ENCODE measurements at regions of chr6 and their contacts with region 1.

Region 1: DNA sequence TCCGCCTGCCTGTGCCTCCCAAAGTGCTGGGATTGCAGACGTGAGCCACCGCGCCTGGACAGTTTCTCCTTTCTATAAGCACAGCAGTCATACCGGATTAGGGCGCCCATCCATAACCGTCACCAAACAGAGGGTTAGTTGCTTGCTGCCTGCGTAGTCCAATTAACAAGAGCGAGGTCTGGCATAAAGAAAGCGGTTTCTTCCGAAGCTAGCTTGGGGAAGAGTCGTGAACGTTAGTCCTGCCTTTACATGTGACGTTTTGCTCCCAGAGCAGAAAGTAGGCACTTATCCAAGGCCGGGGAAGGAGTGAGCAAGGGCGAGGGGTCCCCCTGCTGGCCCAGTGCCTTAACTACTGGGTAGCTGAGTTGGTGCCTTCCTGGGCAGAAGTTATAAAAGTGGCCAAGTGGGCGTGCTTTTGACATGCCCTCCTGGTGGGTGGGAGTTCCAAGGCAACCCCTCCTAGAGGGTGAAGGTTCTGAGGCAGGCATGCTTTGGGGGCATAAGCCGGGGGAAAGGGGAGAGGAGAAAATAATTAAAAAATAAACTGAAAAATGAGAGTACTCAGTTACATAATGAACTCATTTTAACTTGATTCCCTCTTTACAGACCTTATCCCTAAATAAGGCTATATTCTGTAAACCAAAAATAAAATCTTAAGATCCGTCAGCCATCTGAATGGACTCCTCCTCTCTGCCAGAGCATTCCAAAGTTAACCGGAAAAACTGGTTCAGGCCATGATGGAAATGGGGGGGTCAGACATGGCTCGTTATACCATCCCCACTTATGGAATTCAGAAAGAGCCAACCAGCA is 88.0 kb downstream of the FAM217A start:
- DNase-seq: peak; percentile 77
- ATAC-seq: peak; percentile 98
- H3K4me3 ChIP-seq: peak overlapping the region in 1 of 3 experiments; percentile 52; a peak in 2 of 6 replicates
- H3K27ac ChIP-seq: no peak overlapping the region
- H3K4me1 ChIP-seq: peaks cover 20% of the 10 kb centered on the region
- H3K27me3 ChIP-seq: no peaks in the 10 kb centered on the region
- CTCF ChIP-seq: peak; percentile 99
- EP300 ChIP-seq: no peak
- POLR2A ChIP-seq: no peak
- RAD21 ChIP-seq: peak; percentile 96

Region 2: DNA sequence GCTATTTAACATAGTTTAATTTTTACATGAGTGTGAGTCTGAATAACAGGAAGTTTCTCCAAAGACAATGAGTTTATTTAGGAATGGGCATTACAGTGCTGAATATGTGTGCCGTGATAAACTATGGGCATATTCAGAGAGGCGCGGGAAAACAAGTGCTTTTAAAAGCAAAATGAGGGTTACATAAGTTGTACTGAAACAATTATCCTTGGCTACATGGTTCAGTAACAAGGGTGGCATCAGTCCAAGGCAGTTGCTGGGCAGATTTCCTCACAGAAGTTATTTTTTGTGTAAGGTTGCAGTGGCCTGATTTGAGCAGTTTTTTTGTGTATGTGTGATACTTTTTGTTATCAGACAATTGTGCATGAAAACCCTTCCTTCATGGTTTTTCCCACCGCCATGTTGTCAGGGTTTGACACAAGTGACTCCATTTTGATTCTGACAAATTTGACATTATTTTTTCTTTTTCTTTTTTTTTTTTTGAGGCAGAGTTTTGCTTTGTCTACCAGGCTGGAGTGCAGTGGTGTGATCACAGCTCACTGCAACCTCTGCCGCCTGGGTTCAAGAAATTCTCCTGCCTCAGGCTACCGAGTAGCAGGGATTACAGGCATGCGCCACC is 217.1 kb before region 1 on chr6:
- CTCF ChIA-PET with region 1: no interaction called
- POLR2A ChIA-PET with region 1: no interaction called
- in situ Hi-C with region 1: no loop called
- intact Hi-C with region 1: no loop called
- DNase-seq: no peak
- ATAC-seq: no peak
- H3K4me3 ChIP-seq: no peak overlapping the region
- H3K27ac ChIP-seq: no peak overlapping the region
- H3K4me1 ChIP-seq: peaks cover 9% of the 10 kb centered on the region
- H3K27me3 ChIP-seq: peaks cover 0 to 7% of the 10 kb centered on the region in 2 experiments; a peak in 1 of 5 replicates
- CTCF ChIP-seq: no peak
- EP300 ChIP-seq: no peak
- POLR2A ChIP-seq: no peak
- RAD21 ChIP-seq: no peak

Region 3: GRCh38 chr6:3848925-3849605 is 141.8 kb before region 1 on chr6 and contains the start of gene FAM50B:
- CTCF ChIA-PET with region 1: interaction called, 11 read pairs
- POLR2A ChIA-PET with region 1: no interaction called
- in situ Hi-C with region 1: no loop called
- intact Hi-C with region 1: no loop called
- DNase-seq: no peak
- ATAC-seq: peak; percentile 87
- H3K4me3 ChIP-seq: no peak within 1 kb of the TSS
- H3K27ac ChIP-seq: no peak within 1 kb of the TSS
- H3K4me1 ChIP-seq: peaks cover 40% of the 10 kb centered on the region
- H3K27me3 ChIP-seq: no peaks in the 10 kb centered on the region
- CTCF ChIP-seq: peak; percentile 74
- EP300 ChIP-seq: no peak
- POLR2A ChIP-seq: no peak
- RAD21 ChIP-seq: peak; percentile 96
- total RNA-seq, gene FAM50B: not detected in 2 replicates

Region 4: GRCh38 chr6:4085332-4085700 is 94.4 kb after region 1 on chr6:
- CTCF ChIA-PET with region 1: no interaction called
- POLR2A ChIA-PET with region 1: no interaction called
- in situ Hi-C with region 1: no loop called
- intact Hi-C with region 1: no loop called
- DNase-seq: no peak
- ATAC-seq: no peak
- H3K4me3 ChIP-seq: no peak overlapping the region
- H3K27ac ChIP-seq: no peak overlapping the region
- H3K4me1 ChIP-seq: peaks cover 21% of the 10 kb centered on the region
- H3K27me3 ChIP-seq: peaks cover 0 to 7% of the 10 kb centered on the region in 2 experiments; a peak in 4 of 5 replicates
- CTCF ChIP-seq: no peak
- EP300 ChIP-seq: no peak
- POLR2A ChIP-seq: no peak
- RAD21 ChIP-seq: no peak

Measured in HepG2 (cell line).